ENCODE measurements at regions of chr22 and their contacts with region 1.

Region 1: DNA sequence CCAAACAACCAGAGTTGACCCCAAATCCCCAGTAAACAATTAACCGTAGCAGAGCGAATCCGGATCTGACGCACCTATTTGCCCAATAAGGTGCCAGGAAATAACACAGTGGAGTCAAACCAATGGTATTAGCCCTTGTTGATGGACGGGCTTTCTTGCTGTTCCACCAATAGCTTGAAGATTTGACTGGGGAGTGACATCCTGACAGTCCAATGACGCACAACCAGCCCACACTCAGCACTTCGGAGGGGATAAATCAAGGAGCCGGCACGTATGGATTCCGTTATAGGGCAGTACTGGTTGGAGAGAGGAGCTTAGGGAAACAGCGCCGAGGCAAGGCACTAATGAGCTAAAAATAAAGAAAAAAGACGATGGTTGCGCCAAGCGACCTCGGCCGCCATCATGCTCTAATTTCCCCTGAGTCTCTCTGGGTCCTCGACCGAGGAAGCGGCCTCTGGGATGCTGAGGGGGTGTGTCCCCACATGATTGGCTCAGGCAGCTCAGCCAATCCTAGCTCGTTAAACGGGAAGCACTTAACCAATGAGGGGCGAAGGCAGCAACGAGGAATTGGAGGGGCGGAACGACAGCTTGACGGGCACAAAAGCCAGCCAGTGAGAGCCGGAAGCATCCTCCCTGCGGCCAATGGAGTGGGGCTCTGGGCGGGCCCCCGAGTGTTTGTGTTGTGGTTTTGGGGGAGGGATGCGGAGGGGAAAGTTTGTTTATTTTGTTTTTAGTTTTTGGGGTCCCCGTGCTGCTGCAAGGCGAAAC is 49.5 kb downstream of the FAM83F start:
- DNase-seq: peak; percentile 99
- ATAC-seq: peak; percentile 94
- H3K4me3 ChIP-seq: peak overlapping the region; percentile 88
- H3K27ac ChIP-seq: peak overlapping the region; percentile 62
- H3K4me1 ChIP-seq: no peaks in the 10 kb centered on the region
- H3K27me3 ChIP-seq: peaks cover 19% of the 10 kb centered on the region
- CTCF ChIP-seq: no peak
- POLR2A ChIP-seq: peak; percentile 90
- RAD21 ChIP-seq: no peak

Region 2: GRCh38 chr22:39152511-39153219 is 891.6 kb before region 1 on chr22 and contains the start of gene CBX7:
- CTCF ChIA-PET with region 1: no interaction called
- POLR2A ChIA-PET with region 1: no interaction called
- dilution Hi-C with region 1: no loop called
- in situ Hi-C with region 1: loop called (anchors 25 kb)
- intact Hi-C with region 1: no loop called
- DNase-seq: peak; percentile 76
- ATAC-seq: peak; percentile 96
- H3K4me3 ChIP-seq: peak within 1 kb of the TSS; percentile 47
- H3K27ac ChIP-seq: peak within 1 kb of the TSS; percentile 18; the same call in 1 of the 2 replicates
- H3K4me1 ChIP-seq: 0 out of 2 replicates have a peak, but pooled peaks cover 2% of the 10 kb centered on the region
- H3K27me3 ChIP-seq: peaks cover 32% of the 10 kb centered on the region
- CTCF ChIP-seq: no peak
- POLR2A ChIP-seq: no peak
- RAD21 ChIP-seq: no peak
- total RNA-seq, gene CBX7: 0.56 and 0.90 TPM in 2 replicates

Region 3: DNA sequence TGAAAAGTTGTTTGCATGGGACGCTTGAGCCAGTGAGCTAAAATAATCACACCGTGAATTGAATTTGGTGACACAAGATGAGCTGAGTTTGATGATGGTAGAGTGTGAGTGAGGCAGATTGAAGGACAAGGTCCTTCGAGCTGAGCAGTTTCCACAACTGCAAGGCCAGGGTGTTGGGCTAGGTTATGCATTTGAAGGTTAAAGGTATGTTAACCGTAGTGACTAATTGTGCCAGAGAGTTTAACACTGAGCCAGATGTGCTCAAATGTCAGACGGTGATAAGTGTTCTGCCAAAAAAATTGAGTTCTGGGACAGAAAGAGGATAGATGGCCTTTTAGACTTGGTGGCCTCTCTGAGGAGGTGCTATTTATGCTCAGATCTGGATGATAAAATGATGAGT is 40.0 kb after region 1 on chr22:
- CTCF ChIA-PET with region 1: no interaction called
- POLR2A ChIA-PET with region 1: no interaction called
- dilution Hi-C with region 1: no loop called
- in situ Hi-C with region 1: no loop called
- intact Hi-C with region 1: no loop called
- DNase-seq: no peak
- ATAC-seq: no peak
- H3K4me3 ChIP-seq: no peak overlapping the region
- H3K27ac ChIP-seq: no peak overlapping the region
- H3K4me1 ChIP-seq: no peaks in the 10 kb centered on the region
- H3K27me3 ChIP-seq: peaks cover 14% of the 10 kb centered on the region
- CTCF ChIP-seq: no peak
- POLR2A ChIP-seq: no peak
- RAD21 ChIP-seq: no peak

Region 4: GRCh38 chr22:40107851-40108378 is 63.6 kb after region 1 on chr22:
- CTCF ChIA-PET with region 1: no interaction called
- POLR2A ChIA-PET with region 1: no interaction called
- dilution Hi-C with region 1: no loop called
- in situ Hi-C with region 1: no loop called
- intact Hi-C with region 1: no loop called
- DNase-seq: peak; percentile 12
- ATAC-seq: peak; percentile 76
- H3K4me3 ChIP-seq: peak overlapping the region; percentile 17; the same call in 1 of the 2 replicates
- H3K27ac ChIP-seq: peak overlapping the region; percentile 21; the same call in 1 of the 2 replicates
- H3K4me1 ChIP-seq: peaks cover 8% of the 10 kb centered on the region
- H3K27me3 ChIP-seq: no peaks in the 10 kb centered on the region; the same call in 1 of the 2 replicates
- CTCF ChIP-seq: no peak
- POLR2A ChIP-seq: no peak
- RAD21 ChIP-seq: no peak

Region 5: GRCh38 chr22:40177738-40178416 is 133.6 kb after region 1 on chr22 and contains the start of gene TNRC6B:
- CTCF ChIA-PET with region 1: interaction called, 3 read pairs
- POLR2A ChIA-PET with region 1: no interaction called
- dilution Hi-C with region 1: no loop called
- in situ Hi-C with region 1: no loop called
- intact Hi-C with region 1: loop called (anchors 2 kb)
- DNase-seq: peak; percentile 98
- ATAC-seq: peak; percentile 83
- H3K4me3 ChIP-seq: peak within 1 kb of the TSS; percentile 60
- H3K27ac ChIP-seq: peak within 1 kb of the TSS; percentile 53
- H3K4me1 ChIP-seq: peaks cover 5% of the 10 kb centered on the region
- H3K27me3 ChIP-seq: no peaks in the 10 kb centered on the region
- CTCF ChIP-seq: no peak
- POLR2A ChIP-seq: peak; percentile 98
- RAD21 ChIP-seq: peak; percentile 23
- total RNA-seq, gene TNRC6B: 14.7 and 17.0 TPM in 2 replicates

Region 6: DNA sequence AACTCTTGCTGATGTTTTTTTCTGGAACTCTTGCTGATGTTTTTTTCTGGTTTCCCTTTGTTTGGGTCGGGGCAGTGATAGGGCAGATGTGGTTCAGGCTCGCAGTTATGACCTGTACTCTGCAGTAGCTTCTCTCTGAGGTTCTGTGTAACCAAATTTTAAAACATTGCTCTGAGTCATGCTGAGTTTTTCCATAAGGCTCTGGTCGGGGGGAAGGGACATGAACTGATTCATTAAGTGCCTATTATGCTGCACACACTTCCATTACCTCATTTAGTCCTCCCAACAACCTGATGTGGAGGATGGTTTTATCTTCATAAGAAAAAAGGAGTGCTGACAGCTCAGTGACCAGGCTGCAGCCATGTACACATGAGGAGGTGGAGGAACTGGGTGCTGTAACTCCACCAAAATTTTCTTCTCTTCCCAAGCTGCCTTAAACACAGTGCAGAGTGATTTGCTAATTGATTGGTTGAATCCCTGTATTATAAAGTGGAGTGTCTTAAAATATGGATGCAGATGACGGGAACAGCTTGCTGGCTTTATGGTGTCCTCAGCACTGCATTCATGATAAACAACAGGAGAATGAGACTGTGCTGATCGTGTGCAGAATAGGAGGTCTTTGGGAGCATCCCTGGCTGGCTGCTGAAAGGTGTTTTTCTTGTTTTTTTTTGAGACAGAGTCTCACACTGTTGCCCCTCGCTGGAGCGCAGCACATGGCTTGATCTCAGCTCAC is 152.5 kb after region 1 on chr22:
- CTCF ChIA-PET with region 1: interaction called, 4 read pairs
- POLR2A ChIA-PET with region 1: interaction called, 16 read pairs
- dilution Hi-C with region 1: no loop called
- in situ Hi-C with region 1: no loop called
- intact Hi-C with region 1: no loop called
- DNase-seq: peak; percentile 97
- ATAC-seq: peak; percentile 100
- H3K4me3 ChIP-seq: no peak overlapping the region
- H3K27ac ChIP-seq: no peak overlapping the region
- H3K4me1 ChIP-seq: peaks cover 16% of the 10 kb centered on the region
- H3K27me3 ChIP-seq: no peaks in the 10 kb centered on the region
- CTCF ChIP-seq: no peak
- POLR2A ChIP-seq: no peak
- RAD21 ChIP-seq: no peak; the same call in 1 of the 2 replicates

Region 7: GRCh38 chr22:40449676-40450035 is 405.4 kb after region 1 on chr22:
- CTCF ChIA-PET with region 1: no interaction called
- POLR2A ChIA-PET with region 1: no interaction called
- dilution Hi-C with region 1: no loop called
- in situ Hi-C with region 1: no loop called
- intact Hi-C with region 1: no loop called
- DNase-seq: peak; percentile 62
- ATAC-seq: peak; percentile 21
- H3K4me3 ChIP-seq: no peak overlapping the region
- H3K27ac ChIP-seq: no peak overlapping the region
- H3K4me1 ChIP-seq: peaks cover 22% of the 10 kb centered on the region
- H3K27me3 ChIP-seq: no peaks in the 10 kb centered on the region
- CTCF ChIP-seq: no peak
- POLR2A ChIP-seq: no peak
- RAD21 ChIP-seq: no peak